Common myeloid progenitor, CD34-positive (primary cell): ENCODE measurements at regions of chr1 and their contacts with region 1.

Region 1: GRCh38 chr1:89762779-89763648 is 57.8 kb upstream of the LRRC8D start:
- DNase-seq: peak; percentile 83 to 89 (median 89)
- H3K4me3 ChIP-seq: peak overlapping the region; percentile 47 to 82 (median 65)
- H3K27ac ChIP-seq: no peak overlapping the region
- H3K4me1 ChIP-seq: peaks cover 11 to 49% (median 24%) of the 10 kb centered on the region in 4 experiments
- H3K27me3 ChIP-seq: no peaks in the 10 kb centered on the region

Region 2: DNA sequence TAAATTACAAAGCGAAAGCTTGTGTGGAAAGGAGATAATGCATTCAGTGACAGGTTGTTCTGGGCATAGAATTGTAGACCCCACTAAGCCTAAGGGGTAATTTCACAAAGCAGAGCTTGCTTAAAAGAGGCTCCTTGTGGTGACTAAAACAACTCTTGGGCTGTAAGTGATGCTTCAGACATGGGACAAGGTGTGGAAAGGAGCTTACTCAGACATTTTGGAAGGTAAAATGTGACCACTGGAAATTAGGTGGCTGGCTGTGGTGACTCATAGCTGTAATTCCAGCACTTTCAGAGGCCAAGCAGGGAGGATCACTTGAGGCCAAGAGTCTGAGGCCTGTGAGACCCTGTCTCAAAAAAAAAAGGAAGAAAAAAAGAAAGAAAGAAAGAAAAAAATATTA is 181.2 kb before region 1 on chr1:
- CTCF ChIA-PET with region 1: interaction called, 11 read pairs
- POLR2A ChIA-PET with region 1: no interaction called
- DNase-seq: no peak
- H3K4me3 ChIP-seq: no peak overlapping the region
- H3K27ac ChIP-seq: no peak overlapping the region
- H3K4me1 ChIP-seq: no peaks in the 10 kb centered on the region
- H3K27me3 ChIP-seq: no peaks in the 10 kb centered on the region

Region 3: GRCh38 chr1:89605692-89606091 is 157.3 kb before region 1 on chr1:
- CTCF ChIA-PET with region 1: interaction called, 12 read pairs
- POLR2A ChIA-PET with region 1: interaction called, 4 read pairs
- DNase-seq: no peak
- H3K4me3 ChIP-seq: no peak overlapping the region
- H3K27ac ChIP-seq: no peak overlapping the region
- H3K4me1 ChIP-seq: no peaks in the 10 kb centered on the region
- H3K27me3 ChIP-seq: no peaks in the 10 kb centered on the region

Region 4: GRCh38 chr1:89622895-89623294 is 140.1 kb before region 1 on chr1:
- CTCF ChIA-PET with region 1: interaction called, 46 read pairs
- POLR2A ChIA-PET with region 1: no interaction called
- DNase-seq: peak; percentile 46 to 68 (median 58)
- H3K4me3 ChIP-seq: no peak overlapping the region
- H3K27ac ChIP-seq: no peak overlapping the region
- H3K4me1 ChIP-seq: no peaks in the 10 kb centered on the region
- H3K27me3 ChIP-seq: no peaks in the 10 kb centered on the region

Region 5: GRCh38 chr1:89670163-89670562 is 92.9 kb before region 1 on chr1:
- CTCF ChIA-PET with region 1: interaction called, 11 read pairs
- POLR2A ChIA-PET with region 1: interaction called, 4 read pairs
- DNase-seq: peak; percentile 79 to 95 (median 93)
- H3K4me3 ChIP-seq: no peak overlapping the region
- H3K27ac ChIP-seq: peak overlapping the region; percentile 57 to 58
- H3K4me1 ChIP-seq: peaks cover 4 to 16% (median 8%) of the 10 kb centered on the region in 4 experiments
- H3K27me3 ChIP-seq: no peaks in the 10 kb centered on the region

Region 6: GRCh38 chr1:89681045-89681729 is 81.8 kb before region 1 on chr1:
- CTCF ChIA-PET with region 1: no interaction called
- POLR2A ChIA-PET with region 1: no interaction called
- DNase-seq: no peak
- H3K4me3 ChIP-seq: no peak overlapping the region
- H3K27ac ChIP-seq: no peak overlapping the region
- H3K4me1 ChIP-seq: no peaks in the 10 kb centered on the region
- H3K27me3 ChIP-seq: no peaks in the 10 kb centered on the region